ENCODE measurements at regions of chr3 and their contacts with region 1.

Region 1: DNA sequence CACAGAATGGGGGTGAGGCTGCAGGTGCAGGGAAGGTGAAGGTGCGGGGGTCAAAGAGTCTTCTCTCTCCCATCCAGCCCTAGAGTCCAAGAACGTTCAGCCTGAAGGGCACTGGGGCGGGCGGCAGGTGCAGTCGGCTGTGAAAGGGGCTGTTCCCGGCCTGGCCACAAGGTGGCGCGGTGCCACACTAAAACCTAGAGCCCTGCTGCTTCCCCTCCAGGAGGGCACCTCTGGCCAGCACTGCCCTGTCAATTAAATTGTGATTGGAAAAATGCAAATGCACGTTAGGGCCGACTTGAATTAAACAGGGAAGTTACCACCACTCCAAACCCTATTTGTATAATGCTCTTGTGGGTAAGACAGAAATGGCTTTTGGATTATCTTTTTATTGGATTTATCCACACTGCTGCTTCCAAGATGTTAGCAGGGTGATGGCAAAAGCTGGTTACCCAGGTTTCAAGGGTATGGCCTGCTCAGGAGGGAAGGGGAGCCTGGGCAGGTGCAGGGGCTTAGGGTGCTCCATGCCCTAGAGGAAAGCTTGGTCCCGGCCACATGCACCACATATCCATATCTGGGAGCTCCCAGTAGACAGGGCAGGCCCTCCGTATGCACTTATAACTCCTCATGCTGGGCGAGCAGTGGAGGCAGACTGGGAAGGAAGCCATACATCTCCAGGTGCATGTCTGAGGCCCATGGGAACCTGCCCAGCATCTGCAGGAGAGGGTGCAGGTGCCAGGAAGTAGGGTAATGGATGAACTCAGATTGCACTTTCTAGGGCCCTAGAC is 119.8 kb downstream of the ADCY5 start:
- DNase-seq: peak; percentile 35 to 80 (median 67)
- ATAC-seq: peak; percentile 63
- H3K4me3 ChIP-seq: no peak overlapping the region
- H3K4me3 Mint-ChIP-seq: no peak overlapping the region
- H3K27ac ChIP-seq: no peak overlapping the region
- H3K27ac Mint-ChIP-seq: no peak overlapping the region
- H3K4me1 ChIP-seq: peaks cover 3% of the 10 kb centered on the region
- H3K4me1 Mint-ChIP-seq: no peaks in the 10 kb centered on the region
- H3K27me3 ChIP-seq: no peaks in the 10 kb centered on the region
- H3K27me3 Mint-ChIP-seq: no peaks in the 10 kb centered on the region
- CTCF ChIP-seq: peak; percentile 86

Region 2: DNA sequence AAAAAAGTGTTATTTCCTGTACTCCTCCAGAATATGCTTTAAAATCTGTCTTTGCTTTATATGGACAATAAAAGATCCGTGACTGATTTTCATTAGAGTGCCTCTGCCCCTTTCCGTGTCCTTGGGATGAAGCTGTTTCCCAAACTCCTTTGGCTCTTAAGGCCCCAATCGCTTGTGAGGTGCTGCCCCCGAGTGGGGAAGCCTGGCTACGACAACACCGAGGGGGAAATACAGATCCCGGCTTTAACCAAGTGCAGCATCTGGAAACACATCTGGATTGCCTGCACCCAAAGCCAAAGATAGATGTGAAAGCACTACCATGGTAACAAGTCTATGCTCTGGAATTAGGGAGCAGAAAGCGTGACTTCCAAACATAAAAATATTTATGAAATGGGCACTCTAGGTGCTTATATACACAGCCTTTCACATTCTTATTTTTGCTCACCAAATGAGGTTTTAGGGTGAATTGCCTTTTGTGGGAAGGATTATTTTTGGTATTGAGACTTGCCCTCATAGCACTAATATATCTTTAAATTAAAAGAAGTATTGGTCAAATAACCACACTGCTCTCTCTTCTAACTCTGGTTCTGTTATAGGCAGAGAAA is 160.5 kb after region 1 on chr3:
- CTCF ChIA-PET with region 1: no interaction called
- POLR2A ChIA-PET with region 1: no interaction called
- intact Hi-C with region 1: loop called (anchors 1 to 5 kb)
- DNase-seq: peak in 13 of 14 experiments; percentile 5 to 49 (median 17)
- ATAC-seq: no peak
- H3K4me3 ChIP-seq: no peak overlapping the region
- H3K4me3 Mint-ChIP-seq: no peak overlapping the region
- H3K27ac ChIP-seq: no peak overlapping the region
- H3K27ac Mint-ChIP-seq: no peak overlapping the region
- H3K4me1 ChIP-seq: no peaks in the 10 kb centered on the region
- H3K4me1 Mint-ChIP-seq: no peaks in the 10 kb centered on the region
- H3K27me3 ChIP-seq: no peaks in the 10 kb centered on the region
- H3K27me3 Mint-ChIP-seq: no peaks in the 10 kb centered on the region
- CTCF ChIP-seq: peak; percentile 70

Region 3: DNA sequence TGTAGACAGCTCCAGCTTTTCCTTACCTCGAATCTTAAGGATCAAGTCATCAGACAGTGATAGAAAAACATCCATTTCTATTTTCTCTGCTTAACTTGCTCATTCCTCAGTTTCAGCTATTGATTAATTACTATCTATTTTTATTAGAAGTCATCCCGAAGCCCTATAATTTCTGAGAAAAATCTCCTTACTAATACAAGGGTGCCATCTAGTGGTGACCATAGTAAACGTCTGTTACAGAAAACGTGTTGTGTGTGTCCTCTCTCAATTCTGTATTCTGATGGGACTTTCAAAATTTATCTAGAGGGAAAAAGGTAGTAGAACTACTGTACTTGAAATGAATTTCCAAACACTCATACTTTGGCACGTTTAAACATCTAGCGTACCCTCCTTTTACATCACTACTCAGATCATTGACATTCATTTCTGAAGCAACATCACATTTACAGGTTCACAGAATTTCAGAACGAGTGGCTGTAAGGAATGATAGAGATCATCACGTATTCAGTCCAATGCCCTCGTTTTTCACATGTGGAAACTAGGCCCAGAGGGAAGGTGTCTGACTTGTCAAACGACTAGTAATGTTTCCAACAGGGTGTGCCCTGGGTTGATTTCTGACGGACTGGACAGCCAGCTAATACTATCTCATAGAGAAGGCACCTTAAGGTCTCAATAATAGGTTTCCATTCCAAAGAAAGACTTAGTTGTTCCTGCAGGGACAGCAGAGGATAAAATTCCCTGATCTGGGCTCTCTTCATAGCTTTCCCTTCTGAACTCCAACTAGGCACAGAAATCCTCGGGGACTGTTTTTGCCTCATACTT is 230.2 kb after region 1 on chr3:
- CTCF ChIA-PET with region 1: interaction called, 4 read pairs
- POLR2A ChIA-PET with region 1: no interaction called
- intact Hi-C with region 1: loop called (anchors 1 kb)
- DNase-seq: peak in 4 of 14 experiments; percentile 27 to 75 (median 66)
- ATAC-seq: no peak
- H3K4me3 ChIP-seq: no peak overlapping the region
- H3K4me3 Mint-ChIP-seq: no peak overlapping the region
- H3K27ac ChIP-seq: no peak overlapping the region
- H3K27ac Mint-ChIP-seq: no peak overlapping the region
- H3K4me1 ChIP-seq: no peaks in the 10 kb centered on the region
- H3K4me1 Mint-ChIP-seq: no peaks in the 10 kb centered on the region
- H3K27me3 ChIP-seq: no peaks in the 10 kb centered on the region
- H3K27me3 Mint-ChIP-seq: no peaks in the 10 kb centered on the region
- CTCF ChIP-seq: peak; percentile 98